B cell (primary cell): ENCODE measurements at regions of chr10 and their contacts with region 1.

Region 1: DNA sequence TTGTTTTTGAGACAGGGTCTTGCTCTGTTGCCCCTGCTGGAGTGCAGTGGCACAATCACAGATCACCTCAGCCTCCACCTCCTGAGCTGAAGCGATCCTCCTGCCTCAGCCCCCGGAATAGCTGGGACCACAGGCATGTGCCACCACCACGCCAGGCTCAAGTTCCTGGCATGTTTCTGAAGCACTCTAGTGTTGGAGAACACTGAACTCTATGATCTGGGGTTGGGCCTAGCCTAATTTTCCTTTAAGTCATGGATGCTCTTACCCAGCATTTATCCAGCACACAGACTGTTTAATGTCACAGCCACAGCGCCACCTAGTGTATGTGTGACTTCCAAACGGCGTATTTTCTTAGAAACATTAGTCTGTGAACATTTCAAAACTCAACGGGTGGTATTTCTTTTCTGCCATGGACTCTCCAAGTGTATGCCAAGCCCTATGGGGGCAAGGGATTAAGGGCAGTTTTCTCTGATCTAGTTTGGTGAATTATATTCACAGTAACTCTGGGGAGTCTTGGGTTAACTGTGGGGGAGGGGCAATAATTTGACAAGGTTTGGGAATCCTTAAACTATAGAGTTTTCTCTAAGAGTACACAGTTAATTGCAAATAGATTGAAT is 91.8 kb downstream of the CREM start:
- DNase-seq: peak; percentile 87
- ATAC-seq: peak; percentile 78
- H3K4me3 ChIP-seq: no peak overlapping the region
- H3K4me3 Mint-ChIP-seq: no peak overlapping the region
- H3K27ac ChIP-seq: no peak overlapping the region
- H3K27ac Mint-ChIP-seq: no peak overlapping the region
- H3K4me1 ChIP-seq: no peaks in the 10 kb centered on the region
- H3K4me1 Mint-ChIP-seq: peaks cover 12% of the 10 kb centered on the region
- H3K27me3 ChIP-seq: peaks cover 0 to 2% (median 0%) of the 10 kb centered on the region in 4 experiments
- H3K27me3 Mint-ChIP-seq: peaks cover 12% of the 10 kb centered on the region
- CTCF ChIP-seq: peak; percentile 88

Region 2: DNA sequence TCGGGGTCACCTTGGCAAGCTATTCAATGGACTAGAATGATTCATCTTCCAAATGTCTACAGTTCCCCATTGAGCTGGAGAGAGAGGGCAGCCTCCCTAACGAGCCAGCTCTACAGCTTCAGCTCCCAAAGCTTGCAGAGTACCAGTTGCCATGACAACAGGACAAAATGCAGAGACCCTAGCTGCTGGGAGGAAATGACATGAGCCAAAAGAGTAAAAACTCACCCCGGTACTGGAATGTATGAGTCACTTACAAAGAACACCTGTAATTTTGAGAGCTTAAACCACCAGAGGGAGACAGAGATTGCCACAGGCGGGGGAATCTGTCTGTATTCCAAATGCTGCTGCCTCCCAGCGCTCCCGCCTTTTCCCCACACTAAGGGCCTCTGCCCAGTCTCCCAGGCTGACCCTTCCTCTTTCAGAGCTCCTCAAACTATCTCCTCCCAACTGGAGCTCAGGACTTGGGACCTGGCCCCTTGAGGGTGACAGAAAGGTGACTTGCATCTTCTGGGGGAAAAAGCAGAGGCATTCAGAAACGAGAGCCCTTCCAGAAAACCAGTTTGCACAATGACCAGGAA is 223.8 kb before region 1 on chr10:
- CTCF ChIA-PET with region 1: interaction called, 24 read pairs
- POLR2A ChIA-PET with region 1: no interaction called
- intact Hi-C with region 1: loop called (anchors 10 kb)
- DNase-seq: peak; percentile 12
- ATAC-seq: peak; percentile 51
- H3K4me3 ChIP-seq: no peak overlapping the region
- H3K4me3 Mint-ChIP-seq: no peak overlapping the region
- H3K27ac ChIP-seq: no peak overlapping the region
- H3K27ac Mint-ChIP-seq: no peak overlapping the region
- H3K4me1 ChIP-seq: no peaks in the 10 kb centered on the region
- H3K4me1 Mint-ChIP-seq: peaks cover 8% of the 10 kb centered on the region
- H3K27me3 ChIP-seq: no peaks in the 10 kb centered on the region
- H3K27me3 Mint-ChIP-seq: no peaks in the 10 kb centered on the region
- CTCF ChIP-seq: peak; percentile 46

Region 3: DNA sequence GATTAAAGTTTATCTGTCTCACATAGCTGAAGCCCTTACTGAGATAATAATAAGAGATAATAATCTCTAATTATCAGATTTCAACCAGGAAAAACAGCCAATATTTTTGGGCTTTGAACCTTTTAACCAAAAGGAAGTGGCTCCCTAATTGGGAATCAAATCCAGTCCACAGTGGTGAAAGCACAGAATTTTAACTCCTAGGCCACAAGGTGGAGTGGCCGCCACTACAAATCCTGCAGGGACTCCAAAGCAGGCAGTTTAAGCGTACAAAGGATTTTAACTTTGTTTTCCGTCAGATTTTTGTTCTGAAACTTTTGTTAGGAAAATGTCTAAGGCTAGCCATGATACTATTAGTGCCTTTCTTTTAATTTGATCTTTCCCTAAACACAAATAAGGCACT is 18.3 kb after region 1 on chr10:
- CTCF ChIA-PET with region 1: interaction called, 11 read pairs
- POLR2A ChIA-PET with region 1: no interaction called
- intact Hi-C with region 1: no loop called
- DNase-seq: no peak
- ATAC-seq: no peak
- H3K4me3 ChIP-seq: no peak overlapping the region
- H3K4me3 Mint-ChIP-seq: no peak overlapping the region
- H3K27ac ChIP-seq: no peak overlapping the region
- H3K27ac Mint-ChIP-seq: no peak overlapping the region
- H3K4me1 ChIP-seq: no peaks in the 10 kb centered on the region
- H3K4me1 Mint-ChIP-seq: no peaks in the 10 kb centered on the region
- H3K27me3 ChIP-seq: no peaks in the 10 kb centered on the region
- H3K27me3 Mint-ChIP-seq: no peaks in the 10 kb centered on the region
- CTCF ChIP-seq: no peak